ENCODE measurements at regions of chr19 and their contacts with region 1.

Region 1: GRCh38 chr19:48872182-48872883 is at the start of gene PPP1R15A:
- DNase-seq: peak; percentile 98

Region 2: GRCh38 chr19:48819366-48819816 is 52.9 kb before region 1 on chr19:
- CTCF ChIA-PET with region 1: no interaction called
- POLR2A ChIA-PET with region 1: no interaction called
- DNase-seq: no peak

Region 3: GRCh38 chr19:48887861-48888612 is 15.7 kb after region 1 on chr19:
- CTCF ChIA-PET with region 1: no interaction called
- POLR2A ChIA-PET with region 1: interaction called, 16 read pairs
- DNase-seq: no peak

Region 4: DNA sequence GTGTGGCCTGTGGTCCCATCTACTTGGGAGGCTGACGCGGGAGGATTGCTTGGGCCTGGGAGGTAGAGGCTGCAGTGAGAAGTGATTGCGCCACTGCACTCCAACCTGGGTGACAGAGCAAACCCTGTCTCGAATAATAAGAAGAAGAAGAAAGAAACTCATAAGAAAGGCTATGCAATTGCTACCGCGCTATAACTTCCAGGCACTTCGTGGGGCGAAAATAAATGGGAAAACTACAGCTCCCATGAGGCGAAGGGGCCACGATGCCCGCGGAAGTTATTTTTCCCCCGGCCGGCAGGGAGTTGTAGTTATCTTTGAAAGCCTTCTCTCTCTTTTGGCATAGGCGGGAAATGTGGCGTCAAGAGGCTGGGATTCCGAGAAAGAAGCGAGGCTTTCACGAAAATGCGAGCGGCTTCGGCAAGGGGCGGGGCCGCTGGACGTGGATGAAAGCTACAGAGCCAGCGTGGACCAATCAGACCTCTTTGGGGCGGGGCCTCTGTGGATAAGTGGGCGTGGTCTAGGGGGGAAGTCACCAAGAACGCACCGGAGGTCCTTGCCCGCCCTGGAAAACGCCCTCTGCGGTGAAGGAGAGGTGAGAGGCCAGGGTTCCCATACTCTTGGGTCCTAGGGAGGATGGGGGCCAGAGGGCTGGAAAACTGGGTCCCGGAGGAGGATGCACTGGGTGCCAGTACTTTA is 27.6 kb after region 1 on chr19 and contains the start of gene NUCB1:
- CTCF ChIA-PET with region 1: no interaction called
- POLR2A ChIA-PET with region 1: interaction called, 40 read pairs
- DNase-seq: peak; percentile 99

Measured in HEK293T (cell line).